B cell (primary cell): ENCODE measurements at regions of chr2 and their contacts with region 1.

Region 1: GRCh38 chr2:181419129-181419855 is 37.9 kb upstream of the ITGA4 start:
- DNase-seq: peak; percentile 83
- ATAC-seq: peak; percentile 77
- H3K4me3 ChIP-seq: no peak overlapping the region
- H3K4me3 Mint-ChIP-seq: peak overlapping the region; percentile 55
- H3K27ac ChIP-seq: peak overlapping the region; percentile 93 to 98
- H3K27ac Mint-ChIP-seq: peak overlapping the region; percentile 86
- H3K4me1 ChIP-seq: peaks cover 44 to 51% of the 10 kb centered on the region in 2 donors
- H3K4me1 Mint-ChIP-seq: peaks cover 65% of the 10 kb centered on the region
- H3K27me3 ChIP-seq: no peaks in the 10 kb centered on the region
- H3K27me3 Mint-ChIP-seq: no peaks in the 10 kb centered on the region
- CTCF ChIP-seq: no peak

Region 2: DNA sequence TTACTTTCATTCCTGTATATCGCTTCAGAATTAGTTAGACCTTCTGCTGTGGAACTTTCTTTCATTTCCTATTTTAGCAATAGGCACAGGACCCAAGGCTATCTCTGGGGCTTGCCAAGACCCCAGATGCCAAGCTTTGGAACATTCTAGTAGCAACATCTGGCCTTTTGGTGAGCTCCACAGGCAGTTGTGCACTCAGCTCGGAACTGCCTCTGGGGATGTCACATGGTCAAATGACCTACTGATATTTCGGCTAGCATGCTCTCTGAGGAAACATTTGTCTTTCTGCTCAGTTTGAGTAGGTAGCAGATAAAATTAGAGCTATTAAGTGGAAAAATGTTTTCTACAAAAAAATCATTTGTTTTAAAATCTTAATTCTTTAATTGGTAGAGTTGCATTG is 38.7 kb before region 1 on chr2:
- CTCF ChIA-PET with region 1: interaction called, 3 read pairs
- POLR2A ChIA-PET with region 1: no interaction called
- intact Hi-C with region 1: loop called (anchors 5 kb)
- DNase-seq: no peak
- ATAC-seq: no peak
- H3K4me3 ChIP-seq: no peak overlapping the region
- H3K4me3 Mint-ChIP-seq: no peak overlapping the region
- H3K27ac ChIP-seq: no peak overlapping the region
- H3K27ac Mint-ChIP-seq: no peak overlapping the region
- H3K4me1 ChIP-seq: peaks cover 5 to 12% of the 10 kb centered on the region in 2 donors
- H3K4me1 Mint-ChIP-seq: peaks cover 31% of the 10 kb centered on the region
- H3K27me3 ChIP-seq: no peaks in the 10 kb centered on the region
- H3K27me3 Mint-ChIP-seq: no peaks in the 10 kb centered on the region
- CTCF ChIP-seq: no peak

Region 3: DNA sequence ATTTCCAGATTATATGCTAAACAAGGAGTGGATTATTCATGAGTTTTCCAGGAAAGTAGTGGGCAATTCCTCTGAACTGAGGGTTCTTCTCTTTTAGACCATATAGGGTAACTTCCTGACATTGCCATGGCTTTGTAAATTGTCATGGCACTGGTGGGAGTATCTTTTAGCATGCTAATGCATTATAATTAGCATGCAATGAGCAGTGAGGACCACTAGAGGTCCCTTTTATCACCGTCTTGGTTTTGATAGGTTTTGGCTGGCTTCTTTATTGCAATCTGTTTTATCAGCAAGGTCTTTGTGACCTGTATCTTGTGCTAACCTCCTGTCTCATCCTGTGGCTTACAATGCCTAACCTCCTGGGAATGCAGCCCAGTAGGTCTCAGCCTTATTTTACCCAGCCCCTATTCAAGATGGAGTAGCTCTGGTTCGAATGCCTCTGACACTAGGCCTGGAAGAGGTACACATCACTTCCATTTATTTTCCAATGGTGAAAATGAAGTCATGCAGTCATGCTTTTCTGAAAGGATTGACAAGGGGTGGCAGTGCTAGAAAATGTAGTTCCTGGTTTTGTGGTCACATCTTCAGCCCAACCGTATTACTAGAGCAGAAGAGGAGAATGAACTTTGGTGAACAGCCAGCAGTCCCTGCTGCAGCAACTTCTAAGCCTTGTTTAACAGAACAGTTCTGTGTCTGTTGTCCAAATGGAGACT is 11.3 kb after region 1 on chr2:
- CTCF ChIA-PET with region 1: interaction called, 7 read pairs
- POLR2A ChIA-PET with region 1: interaction called, 3 read pairs
- intact Hi-C with region 1: loop called (anchors 2 kb)
- DNase-seq: peak; percentile 69
- ATAC-seq: peak; percentile 75
- H3K4me3 ChIP-seq: no peak overlapping the region
- H3K4me3 Mint-ChIP-seq: no peak overlapping the region
- H3K27ac ChIP-seq: peak overlapping the region; percentile 51 to 60
- H3K27ac Mint-ChIP-seq: peak overlapping the region; percentile 83
- H3K4me1 ChIP-seq: peaks cover 14% of the 10 kb centered on the region in 2 donors
- H3K4me1 Mint-ChIP-seq: peaks cover 18% of the 10 kb centered on the region
- H3K27me3 ChIP-seq: no peaks in the 10 kb centered on the region
- H3K27me3 Mint-ChIP-seq: no peaks in the 10 kb centered on the region
- CTCF ChIP-seq: peak; percentile 79

Region 4: DNA sequence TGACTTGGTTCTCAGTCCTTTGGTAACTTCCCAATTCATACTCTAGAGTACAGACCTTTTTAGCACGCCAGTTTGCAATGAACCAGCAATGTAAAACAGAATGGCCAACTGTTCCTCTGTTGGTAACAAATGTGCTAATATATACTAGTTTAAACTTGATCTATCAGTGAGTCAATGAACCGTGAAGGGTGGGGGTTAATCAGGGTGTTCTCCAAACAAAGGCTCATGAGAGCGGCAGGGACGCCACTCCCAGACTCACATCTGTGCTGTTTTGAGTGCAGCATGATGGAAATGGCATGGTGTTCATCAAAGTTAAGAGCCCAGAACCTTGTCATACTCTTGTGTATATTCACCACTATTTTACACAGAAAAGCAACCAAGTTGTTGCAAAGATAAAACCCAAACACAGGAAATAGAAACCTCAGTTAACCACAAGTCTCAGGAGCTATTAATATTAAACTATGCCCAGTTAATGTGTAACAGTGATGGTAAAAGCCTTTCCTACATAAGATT is 167.3 kb after region 1 on chr2:
- CTCF ChIA-PET with region 1: no interaction called
- POLR2A ChIA-PET with region 1: no interaction called
- intact Hi-C with region 1: no loop called
- DNase-seq: peak; percentile 12
- ATAC-seq: peak; percentile 43
- H3K4me3 ChIP-seq: no peak overlapping the region
- H3K4me3 Mint-ChIP-seq: peak overlapping the region; percentile 15
- H3K27ac ChIP-seq: no peak overlapping the region
- H3K27ac Mint-ChIP-seq: no peak overlapping the region
- H3K4me1 ChIP-seq: peaks cover 4 to 8% of the 10 kb centered on the region in 2 donors
- H3K4me1 Mint-ChIP-seq: peaks cover 17% of the 10 kb centered on the region
- H3K27me3 ChIP-seq: no peaks in the 10 kb centered on the region
- H3K27me3 Mint-ChIP-seq: peaks cover 4% of the 10 kb centered on the region
- CTCF ChIP-seq: no peak